ENCODE measurements at regions of chr20 and their contacts with region 1.

Region 1: GRCh38 chr20:59910540-59910939 is 22.9 kb downstream of the SYCP2 start:
- DNase-seq: no peak
- H3K4me3 ChIP-seq: no peak overlapping the region
- H3K27ac ChIP-seq: no peak overlapping the region
- H3K4me1 ChIP-seq: no peaks in the 10 kb centered on the region
- H3K27me3 ChIP-seq: peaks cover 45% of the 10 kb centered on the region
- CTCF ChIP-seq: no peak

Region 2: DNA sequence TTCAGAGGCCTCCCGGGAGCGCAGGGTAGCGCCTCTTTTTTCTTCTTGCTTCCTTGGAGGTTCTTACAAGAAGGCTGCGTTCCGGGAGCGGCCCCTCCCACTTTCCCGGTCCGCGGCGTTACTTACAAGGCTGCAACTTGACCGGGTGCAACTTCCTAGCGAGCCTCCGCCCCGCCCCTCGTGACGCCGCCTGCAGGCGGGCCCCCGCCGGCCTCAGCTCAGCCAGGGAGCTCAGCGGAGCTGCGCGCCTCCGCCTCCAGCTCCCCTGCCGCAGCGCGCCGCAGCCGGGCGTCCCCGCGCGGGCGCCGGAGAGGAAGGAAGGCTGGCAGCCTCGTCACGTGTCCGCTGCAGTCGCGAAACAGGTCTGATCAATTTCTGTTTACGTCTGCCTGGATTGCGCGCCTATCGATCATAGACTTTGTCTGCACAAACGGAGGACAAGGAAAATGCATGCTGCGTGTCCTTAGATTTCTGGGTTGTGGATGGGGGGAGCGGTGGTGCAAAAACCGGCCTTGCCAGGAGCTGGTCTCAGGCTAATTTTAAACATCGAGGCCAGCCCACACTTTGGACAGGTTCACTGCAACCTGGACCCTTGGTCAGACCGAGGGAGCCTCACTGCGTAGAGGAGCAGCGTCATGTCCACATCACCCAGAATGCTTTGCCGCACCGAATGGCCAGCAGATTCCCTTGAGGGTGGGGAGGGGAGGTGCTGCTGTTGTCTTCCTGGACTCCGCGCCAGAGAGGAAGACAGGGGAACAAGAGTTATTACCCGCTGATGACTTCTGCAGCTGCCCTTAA is 29.8 kb after region 1 on chr20 and contains the starts of genes FAM217B and PPP1R3D:
- CTCF ChIA-PET with region 1: no interaction called
- POLR2A ChIA-PET with region 1: no interaction called
- intact Hi-C with region 1: no loop called
- DNase-seq: peak; percentile 97
- H3K4me3 ChIP-seq: peak within 1 kb of the TSS; percentile 83
- H3K27ac ChIP-seq: peak within 1 kb of the TSS; percentile 94
- H3K4me1 ChIP-seq: peaks cover 23% of the 10 kb centered on the region
- H3K27me3 ChIP-seq: no peaks in the 10 kb centered on the region
- CTCF ChIP-seq: no peak
- total RNA-seq, gene FAM217B: 26.6 and 27.9 TPM in 2 replicates
- total RNA-seq, gene PPP1R3D: 4.9 and 6.1 TPM in 2 replicates

Region 3: DNA sequence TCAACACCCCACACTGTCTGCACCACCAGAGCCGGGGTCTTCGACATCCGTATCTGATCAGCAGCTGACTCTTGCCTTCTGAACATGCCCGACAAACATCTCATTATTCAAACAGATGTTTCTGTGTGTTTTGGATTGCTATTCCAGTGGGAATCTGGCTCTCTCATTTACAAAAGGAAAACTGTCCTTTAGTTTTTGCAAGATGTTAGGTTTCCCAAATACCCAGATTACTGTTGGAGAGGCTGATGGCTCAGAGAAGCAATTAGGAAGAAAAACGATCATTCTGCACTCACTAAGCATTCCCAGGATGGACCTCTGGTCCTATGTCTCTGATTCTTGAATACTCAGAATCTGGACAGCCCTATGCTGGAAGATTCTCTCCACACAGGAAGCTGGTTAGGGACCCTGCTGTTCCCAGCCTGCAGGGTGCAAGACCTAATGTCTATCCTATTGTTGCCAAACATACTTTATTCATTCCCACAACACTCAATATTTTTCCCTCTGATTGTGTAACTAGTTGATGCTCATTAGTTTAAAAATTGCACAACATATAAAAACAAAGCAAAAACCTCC is 580.6 kb after region 1 on chr20:
- CTCF ChIA-PET with region 1: interaction called, 11 read pairs
- POLR2A ChIA-PET with region 1: no interaction called
- intact Hi-C with region 1: no loop called
- DNase-seq: peak; percentile 49
- H3K4me3 ChIP-seq: no peak overlapping the region
- H3K27ac ChIP-seq: no peak overlapping the region
- H3K4me1 ChIP-seq: peaks cover 6% of the 10 kb centered on the region
- H3K27me3 ChIP-seq: no peaks in the 10 kb centered on the region
- CTCF ChIP-seq: no peak